ENCODE measurements at regions of chr4 and their contacts with region 1.

Region 1: DNA sequence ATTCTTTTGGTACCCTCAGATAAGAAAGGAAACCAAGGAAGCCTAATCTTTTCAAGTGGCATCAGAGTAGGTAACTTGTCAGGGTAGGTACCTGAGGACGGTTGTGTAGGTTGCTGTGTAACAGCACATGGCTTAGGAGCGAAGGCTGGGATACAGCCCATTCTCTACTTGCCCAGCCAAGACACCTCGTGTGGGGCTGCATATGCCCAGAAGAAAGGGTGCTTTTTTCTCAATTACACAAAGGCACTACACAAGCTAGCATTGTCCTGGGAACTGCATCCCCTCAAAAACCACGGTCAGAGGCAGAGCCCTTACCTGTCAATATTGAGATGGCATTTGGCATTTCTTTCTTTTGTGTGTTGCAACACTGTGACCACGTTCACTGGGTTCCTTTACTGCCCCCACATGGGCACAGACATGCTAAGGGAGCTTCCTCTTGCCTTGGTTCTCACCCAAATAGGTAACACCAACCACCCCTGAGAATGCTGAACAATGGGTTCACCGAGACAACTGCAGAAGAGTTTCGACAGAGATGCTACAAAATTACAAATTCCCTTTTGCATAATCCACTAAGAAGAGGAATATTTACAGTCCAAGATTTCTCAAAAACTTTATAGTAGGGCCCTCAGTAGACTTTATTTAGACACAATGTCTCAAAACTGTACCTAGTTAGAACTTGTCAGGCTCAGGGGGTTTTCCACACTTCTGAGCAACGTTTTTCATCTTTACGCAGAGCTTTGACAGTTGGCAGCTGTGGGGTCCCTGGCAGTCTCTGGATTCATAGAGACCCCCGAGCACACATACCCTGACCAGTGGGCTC is 35.8 kb upstream of the TNIP3 start:
- DNase-seq: peak; percentile 29
- CTCF ChIP-seq: no peak

Region 2: DNA sequence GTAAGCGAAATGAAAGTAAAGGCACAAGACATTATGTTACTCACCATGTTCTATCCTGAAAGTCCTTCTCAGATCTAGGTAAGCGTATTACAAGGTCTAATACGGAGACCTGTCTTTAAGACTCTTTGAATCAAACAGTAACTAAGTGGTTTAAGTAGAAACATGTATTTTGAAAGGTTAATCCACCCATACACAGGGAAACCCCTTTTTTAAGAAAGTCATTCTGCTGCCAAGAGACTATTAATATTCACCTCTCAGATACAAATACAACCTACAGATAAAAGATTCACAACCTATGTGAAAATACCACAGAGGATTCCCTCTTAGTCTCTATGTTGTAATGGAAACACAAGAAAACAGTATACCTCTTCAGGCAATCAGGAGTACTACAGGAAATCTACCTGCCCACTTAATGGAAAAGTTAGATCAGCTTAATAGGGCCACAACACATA is 27.4 kb after region 1 on chr4:
- CTCF ChIA-PET with region 1: interaction called, 22 read pairs
- POLR2A ChIA-PET with region 1: no interaction called
- DNase-seq: peak; percentile 23
- CTCF ChIP-seq: no peak

Region 3: GRCh38 chr4:121252224-121252806 is 52.4 kb after region 1 on chr4:
- CTCF ChIA-PET with region 1: interaction called, 22 read pairs
- POLR2A ChIA-PET with region 1: no interaction called
- DNase-seq: peak; percentile 56
- CTCF ChIP-seq: peak; percentile 79